Endothelial cell of umbilical vein (primary cell): ENCODE measurements at regions of chr5 and their contacts with region 1.

Region 1: GRCh38 chr5:42057254-42057690 is 132.2 kb downstream of the FBXO4 start:
- DNase-seq: peak; percentile 51
- H3K4me3 ChIP-seq: no peak overlapping the region
- H3K27ac ChIP-seq: no peak overlapping the region
- H3K4me1 ChIP-seq: no peaks in the 10 kb centered on the region
- H3K27me3 ChIP-seq: no peaks in the 10 kb centered on the region
- CTCF ChIP-seq: peak; percentile 65 to 72
- POLR2A ChIP-seq: no peak

Region 2: DNA sequence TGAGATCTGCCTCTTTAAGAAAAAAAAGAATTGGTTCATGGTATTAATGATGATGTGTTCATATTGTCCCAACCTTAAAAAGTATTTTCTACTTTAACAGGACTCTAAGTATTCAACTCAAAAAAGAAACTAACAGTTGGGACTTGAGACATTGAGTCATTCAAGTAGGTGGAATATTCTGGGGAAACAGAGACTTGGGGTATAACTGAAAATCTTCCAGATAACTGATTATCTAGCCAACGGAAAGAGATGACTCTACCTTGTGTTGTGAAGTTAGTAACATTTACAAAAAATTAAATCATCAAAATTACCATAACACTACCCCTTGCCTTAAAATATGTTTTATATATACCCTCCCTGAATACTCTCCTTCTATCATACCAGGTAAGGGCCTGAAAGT is 206.2 kb before region 1 on chr5:
- CTCF ChIA-PET with region 1: interaction called, 571 read pairs
- POLR2A ChIA-PET with region 1: no interaction called
- dilution Hi-C with region 1: no loop called
- intact Hi-C with region 1: loop called (anchors 1 kb)
- DNase-seq: no peak
- H3K4me3 ChIP-seq: no peak overlapping the region
- H3K27ac ChIP-seq: no peak overlapping the region
- H3K4me1 ChIP-seq: no peaks in the 10 kb centered on the region
- H3K27me3 ChIP-seq: no peaks in the 10 kb centered on the region
- CTCF ChIP-seq: no peak
- POLR2A ChIP-seq: no peak

Region 3: GRCh38 chr5:41863871-41864486 is 193.3 kb before region 1 on chr5:
- CTCF ChIA-PET with region 1: interaction called, 571 read pairs
- POLR2A ChIA-PET with region 1: no interaction called
- dilution Hi-C with region 1: no loop called
- intact Hi-C with region 1: no loop called
- DNase-seq: no peak
- H3K4me3 ChIP-seq: no peak overlapping the region
- H3K27ac ChIP-seq: no peak overlapping the region
- H3K4me1 ChIP-seq: peaks cover 3% of the 10 kb centered on the region
- H3K27me3 ChIP-seq: no peaks in the 10 kb centered on the region
- CTCF ChIP-seq: no peak
- POLR2A ChIP-seq: no peak

Region 4: DNA sequence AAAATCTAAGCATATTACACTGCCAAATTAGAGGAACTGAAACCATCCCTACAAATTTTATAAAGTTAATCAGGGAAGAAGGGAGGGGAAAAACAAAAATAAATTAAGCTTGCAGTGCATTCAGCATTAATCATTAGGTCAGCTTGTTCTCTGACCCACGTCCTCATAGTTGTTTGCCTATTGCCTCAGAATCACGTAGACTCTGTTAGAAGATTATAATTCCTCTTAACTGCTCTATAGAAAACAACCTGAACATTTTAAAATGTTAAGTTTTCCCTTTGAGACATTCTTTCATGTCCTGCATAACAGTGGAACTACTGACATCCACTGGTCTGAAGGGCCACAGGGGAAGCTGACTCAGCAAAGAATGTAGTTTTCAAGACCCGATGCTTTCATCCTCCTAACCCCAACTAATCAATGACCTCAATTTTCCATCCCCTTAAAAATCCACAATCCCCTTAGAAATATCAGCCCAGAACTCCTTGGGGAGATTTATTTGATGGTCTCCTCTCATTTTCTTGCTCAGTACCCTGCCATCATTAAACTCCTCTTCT is 19.8 kb before region 1 on chr5:
- CTCF ChIA-PET with region 1: interaction called, 12 read pairs
- POLR2A ChIA-PET with region 1: no interaction called
- dilution Hi-C with region 1: no loop called
- intact Hi-C with region 1: no loop called
- DNase-seq: no peak
- H3K4me3 ChIP-seq: no peak overlapping the region
- H3K27ac ChIP-seq: no peak overlapping the region
- H3K4me1 ChIP-seq: no peaks in the 10 kb centered on the region
- H3K27me3 ChIP-seq: no peaks in the 10 kb centered on the region
- CTCF ChIP-seq: no peak
- POLR2A ChIP-seq: no peak

Region 5: DNA sequence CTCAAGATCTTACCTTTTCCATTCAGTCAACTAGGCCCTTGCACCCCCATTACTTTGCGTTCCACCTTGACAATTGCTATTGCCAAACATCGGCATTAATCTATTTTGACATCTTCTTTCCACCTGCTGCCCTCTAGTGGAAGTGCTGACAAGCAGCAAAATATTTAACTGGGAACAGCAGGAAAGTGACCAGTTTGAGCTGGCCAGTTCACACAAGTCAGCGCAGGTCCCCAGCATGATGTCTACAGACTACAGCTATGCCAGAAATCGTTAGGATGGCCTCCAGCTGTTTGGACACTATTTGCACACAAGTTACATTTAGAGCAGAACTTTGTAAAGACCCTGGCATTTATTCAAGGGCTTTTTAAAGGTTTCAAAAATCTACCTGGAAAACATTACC is 526.0 kb after region 1 on chr5:
- CTCF ChIA-PET with region 1: interaction called, 12 read pairs
- POLR2A ChIA-PET with region 1: no interaction called
- dilution Hi-C with region 1: no loop called
- intact Hi-C with region 1: no loop called
- DNase-seq: peak; percentile 59
- H3K4me3 ChIP-seq: no peak overlapping the region
- H3K27ac ChIP-seq: no peak overlapping the region
- H3K4me1 ChIP-seq: no peaks in the 10 kb centered on the region
- H3K27me3 ChIP-seq: peaks cover 2 to 5% of the 10 kb centered on the region in 2 experiments
- CTCF ChIP-seq: peak; percentile 73 to 75
- POLR2A ChIP-seq: no peak

Region 6: GRCh38 chr5:42889311-42889933 is 832.1 kb after region 1 on chr5:
- CTCF ChIA-PET with region 1: interaction called, 18 read pairs
- POLR2A ChIA-PET with region 1: no interaction called
- dilution Hi-C with region 1: no loop called
- intact Hi-C with region 1: loop called (anchors 2 kb)
- DNase-seq: peak; percentile 71
- H3K4me3 ChIP-seq: no peak overlapping the region
- H3K27ac ChIP-seq: no peak overlapping the region
- H3K4me1 ChIP-seq: no peaks in the 10 kb centered on the region
- H3K27me3 ChIP-seq: peaks cover 7 to 22% of the 10 kb centered on the region in 2 experiments
- CTCF ChIP-seq: peak; percentile 71 to 82
- POLR2A ChIP-seq: no peak